Stomach (tissue), 19 donors: ENCODE measurements at regions of chr19 and their contacts with region 1.

Region 1: GRCh38 chr19:18846862-18847548 is 15.2 kb downstream of the UPF1 start:
- DNase-seq: peak; percentile 80 to 92
- H3K4me3 ChIP-seq: peak overlapping the region in 1 of 4 donors; percentile 8
- H3K27ac ChIP-seq: peak overlapping the region in 4 of 5 donors; percentile 45 to 81 (median 72)
- H3K4me1 ChIP-seq: peaks cover 46 to 90% (median 86%) of the 10 kb centered on the region in 4 donors
- H3K27me3 ChIP-seq: no peaks in the 10 kb centered on the region
- CTCF ChIP-seq: peak in 5 of 7 experiments; percentile 66 to 86 (median 78)
- EP300 ChIP-seq: no peak
- POLR2A ChIP-seq: no peak

Region 2: DNA sequence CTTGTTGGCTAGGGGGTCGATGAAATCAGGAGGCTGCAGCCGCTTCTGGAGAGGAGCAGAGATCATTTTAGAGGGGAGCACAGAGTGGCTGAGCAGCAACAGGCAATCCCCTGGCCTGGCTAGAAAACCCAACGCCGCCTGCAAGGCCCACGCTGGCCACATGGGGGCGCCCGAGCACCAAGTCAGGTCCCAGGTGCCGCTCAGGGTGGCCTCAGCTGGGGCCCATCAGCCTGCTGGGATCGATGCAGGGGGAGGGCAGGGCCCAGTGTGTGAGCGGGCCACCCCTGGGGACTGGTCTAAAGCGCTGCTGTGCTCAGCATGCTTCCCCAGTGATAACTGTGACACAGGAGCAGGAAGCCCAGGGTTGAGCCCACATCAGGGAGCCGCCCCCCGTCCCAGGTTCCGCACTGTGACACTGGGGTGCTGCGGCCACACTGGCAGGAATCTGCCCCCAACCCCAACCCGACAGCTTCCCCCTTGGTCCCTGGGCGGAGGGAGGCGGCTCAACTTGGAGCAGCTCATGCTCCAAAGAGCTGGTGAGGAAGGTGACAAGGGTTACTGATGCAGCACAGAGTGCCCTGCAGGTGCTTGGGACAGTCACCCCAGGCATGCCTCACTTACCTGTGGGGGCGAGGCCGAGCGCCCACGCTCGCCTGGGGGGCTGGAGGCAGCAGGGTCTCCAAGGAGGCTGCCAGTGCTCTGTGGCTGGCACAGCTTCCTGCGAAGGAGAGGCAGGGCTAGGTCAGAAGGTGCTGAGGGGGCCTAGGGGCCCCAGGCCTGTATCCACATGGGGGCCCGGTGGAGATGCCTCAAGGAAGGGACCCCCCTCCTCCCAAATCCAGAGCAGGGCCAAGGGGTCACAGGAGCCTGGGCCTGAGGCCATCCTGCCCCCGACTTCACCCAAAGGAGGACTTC is 395.8 kb before region 1 on chr19:
- intact Hi-C with region 1: loop called (anchors 10 kb)
- DNase-seq: peak; percentile 91 to 94
- H3K4me3 ChIP-seq: no peak overlapping the region
- H3K27ac ChIP-seq: peak overlapping the region in 1 of 5 donors; percentile 13
- H3K4me1 ChIP-seq: peaks cover 0 to 20% (median 11%) of the 10 kb centered on the region in 4 donors
- H3K27me3 ChIP-seq: no peaks in the 10 kb centered on the region
- CTCF ChIP-seq: peak in 6 of 7 experiments; percentile 91 to 99 (median 96)
- EP300 ChIP-seq: no peak
- POLR2A ChIP-seq: no peak

Region 3: GRCh38 chr19:18589380-18590272 is 257.4 kb before region 1 on chr19:
- intact Hi-C with region 1: loop called (anchors 5 kb)
- DNase-seq: peak; percentile 74 to 92
- H3K4me3 ChIP-seq: peak overlapping the region; percentile 73 to 93 (median 90)
- H3K27ac ChIP-seq: peak overlapping the region; percentile 73 to 92 (median 90)
- H3K4me1 ChIP-seq: peaks cover 20 to 45% (median 38%) of the 10 kb centered on the region in 4 donors
- H3K27me3 ChIP-seq: peaks cover 0 to 1% (median 0%) of the 10 kb centered on the region in 3 donors
- CTCF ChIP-seq: peak in 2 of 7 experiments; percentile 23 to 28
- EP300 ChIP-seq: no peak
- POLR2A ChIP-seq: no peak

Region 4: GRCh38 chr19:18629166-18630088 is 217.6 kb before region 1 on chr19:
- intact Hi-C with region 1: no loop called
- DNase-seq: no peak
- H3K4me3 ChIP-seq: no peak overlapping the region
- H3K27ac ChIP-seq: peak overlapping the region in 1 of 5 donors; percentile 32
- H3K4me1 ChIP-seq: peaks cover 0 to under 1% (median 0%) of the 10 kb centered on the region in 4 donors
- H3K27me3 ChIP-seq: no peaks in the 10 kb centered on the region
- CTCF ChIP-seq: no peak
- EP300 ChIP-seq: peak; percentile 95
- POLR2A ChIP-seq: no peak